Cardiac septum (tissue), 1 donor: ENCODE measurements at regions of chr15 and their contacts with region 1.

Region 1: DNA sequence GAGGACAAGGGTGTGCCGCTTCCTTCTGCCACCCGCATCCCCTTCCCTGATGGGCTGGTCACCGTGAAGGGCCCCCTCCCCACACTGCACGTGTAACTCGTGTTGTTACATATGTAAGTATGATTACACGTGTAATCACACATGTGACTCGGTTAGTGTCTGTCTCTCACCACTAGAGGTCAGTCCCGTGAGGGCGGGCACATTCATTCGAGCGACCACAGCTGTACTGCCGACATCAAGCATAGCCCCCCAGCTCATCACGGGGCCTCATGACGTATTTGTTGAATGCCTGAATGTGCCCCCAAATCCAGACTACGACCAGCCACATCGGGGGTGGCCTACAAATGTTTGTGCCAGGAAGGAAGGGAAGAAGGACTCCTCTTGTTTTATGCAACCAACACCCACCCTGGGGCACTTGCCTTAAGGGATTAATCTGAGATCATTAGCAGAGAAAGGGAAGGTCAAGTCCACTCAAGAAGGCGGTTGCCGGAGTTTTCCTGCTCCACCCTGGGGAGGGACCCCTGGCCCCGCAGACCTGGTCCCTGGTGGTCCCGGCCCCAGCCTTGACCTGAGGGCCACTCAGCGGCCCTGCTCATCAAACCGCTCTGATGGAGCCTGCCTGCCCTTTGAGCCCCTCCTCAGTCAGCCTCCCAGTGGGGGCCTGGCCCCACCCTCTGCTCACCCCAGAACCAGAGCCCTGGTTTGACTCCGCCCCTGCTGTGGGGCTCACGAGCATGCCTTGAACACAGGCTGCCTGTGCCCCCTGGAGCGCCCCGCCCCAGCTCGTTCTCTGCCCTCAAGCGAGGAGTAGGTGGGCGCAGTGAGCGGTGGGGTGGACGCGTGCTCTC is 52.8 kb downstream of the RGMA start:
- DNase-seq: peak; percentile 75

Region 2: GRCh38 chr15:92586383-92586942 is 449.7 kb before region 1 on chr15:
- intact Hi-C with region 1: no loop called
- DNase-seq: peak; percentile 54

Region 3: DNA sequence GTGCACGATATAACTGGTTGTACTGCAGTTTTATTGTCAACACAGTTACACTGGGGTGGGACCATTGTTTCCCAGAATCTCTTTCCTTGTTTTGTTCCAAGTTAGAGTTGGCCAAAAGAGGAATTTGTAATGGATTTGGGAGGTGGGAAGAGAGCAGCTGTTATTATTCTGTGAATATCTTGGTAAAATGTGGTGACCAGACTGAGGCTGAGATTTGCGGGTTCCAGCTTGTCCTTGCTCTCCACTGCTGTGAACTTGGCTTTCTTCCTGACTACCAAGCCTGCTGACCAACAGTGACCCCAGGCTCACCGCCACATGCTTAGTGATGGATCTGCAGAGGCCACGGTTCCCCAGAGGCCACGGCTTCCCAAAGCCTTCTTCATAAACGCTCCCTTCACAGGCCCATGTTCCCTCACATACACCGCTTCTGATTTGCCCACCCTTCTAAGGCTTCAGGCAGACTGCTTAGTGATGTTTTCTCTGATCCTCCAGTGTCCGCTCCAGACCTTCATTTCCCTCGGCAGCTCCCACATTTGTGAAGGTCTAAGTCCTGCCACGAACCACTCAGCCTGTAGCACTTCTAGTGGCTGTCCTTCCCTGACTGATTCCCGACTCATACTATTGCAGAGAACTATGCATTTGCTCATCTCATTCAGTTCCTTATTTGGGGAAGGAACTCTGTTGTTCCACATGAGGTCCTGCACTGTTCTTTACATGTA is 578.4 kb after region 1 on chr15:
- intact Hi-C with region 1: loop called (anchors 5 kb)
- DNase-seq: peak; percentile 76

Region 4: DNA sequence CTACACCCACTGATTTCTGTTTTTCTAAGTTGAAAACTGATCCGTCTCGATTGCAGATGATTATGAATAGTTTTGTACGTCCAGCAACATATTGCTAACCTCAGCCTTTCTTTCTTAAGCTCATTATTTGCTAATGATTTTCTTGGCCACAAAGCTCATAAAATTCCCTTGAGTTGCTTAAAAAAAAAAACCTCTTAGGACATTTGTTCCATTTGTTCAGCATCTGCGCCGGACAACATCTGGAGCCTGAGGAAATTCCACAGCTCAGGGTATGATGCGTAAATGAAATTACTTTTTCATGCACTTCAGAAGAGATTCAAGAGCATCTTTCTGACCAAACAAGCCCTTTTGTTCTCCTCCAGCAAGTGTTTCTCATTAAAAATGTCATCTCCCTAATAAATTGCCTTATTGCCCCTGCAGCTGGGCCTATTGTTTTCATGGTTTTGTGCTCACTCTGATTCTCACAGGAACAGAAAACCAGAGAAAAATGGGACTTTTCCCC is 946.1 kb after region 1 on chr15:
- intact Hi-C with region 1: loop called (anchors 5 kb)
- DNase-seq: no peak

Region 5: GRCh38 chr15:94119923-94120775 is 1084.0 kb after region 1 on chr15:
- intact Hi-C with region 1: loop called (anchors 2 kb)
- DNase-seq: no peak